ENCODE measurements at regions of chr15 and their contacts with region 1.

Region 1: GRCh38 chr15:33360886-33361285 is 50.1 kb downstream of the RYR3 start:
- DNase-seq: no peak
- ATAC-seq: no peak
- H3K4me3 Mint-ChIP-seq: no peak overlapping the region
- H3K27ac Mint-ChIP-seq: no peak overlapping the region
- H3K4me1 Mint-ChIP-seq: no peaks in the 10 kb centered on the region
- H3K27me3 Mint-ChIP-seq: peaks cover 8% of the 10 kb centered on the region

Region 2: DNA sequence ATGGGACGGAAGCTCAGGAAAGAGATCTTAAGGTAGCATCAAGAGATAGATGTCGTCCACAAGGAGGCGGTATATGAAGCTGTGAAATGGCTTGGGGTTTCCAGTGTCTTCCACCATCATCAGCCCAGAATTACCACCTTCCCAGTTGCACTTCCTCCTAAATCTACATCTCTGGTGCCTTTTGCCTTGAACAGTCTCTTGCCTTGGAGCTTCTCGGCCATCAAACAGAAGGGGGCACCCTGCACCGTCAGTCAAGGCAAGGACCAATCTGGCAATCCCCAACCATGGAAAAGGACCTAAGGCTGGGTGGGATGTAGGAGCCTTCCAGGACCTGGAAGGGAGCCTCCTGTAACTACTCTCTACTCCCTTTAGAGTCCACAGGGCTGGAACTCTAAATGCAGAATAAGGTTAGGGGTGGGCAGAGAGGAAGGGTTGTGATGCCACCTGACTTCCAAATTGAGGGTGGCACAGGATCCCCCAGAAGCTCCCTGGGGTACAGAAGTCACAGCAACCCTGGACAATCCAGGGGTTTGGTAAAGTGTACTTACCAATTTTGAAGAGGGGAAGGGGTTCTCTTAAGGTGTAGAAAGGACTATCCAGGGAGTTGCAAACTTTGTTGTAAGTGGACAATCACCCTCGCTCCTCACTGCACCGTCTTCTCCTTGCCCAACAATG is 51.1 kb before region 1 on chr15:
- CTCF ChIA-PET with region 1: no interaction called
- POLR2A ChIA-PET with region 1: no interaction called
- intact Hi-C with region 1: loop called in 1 of 2 experiments (anchors 10 kb)
- DNase-seq: peak; percentile 15
- ATAC-seq: no peak
- H3K4me3 Mint-ChIP-seq: no peak overlapping the region
- H3K27ac Mint-ChIP-seq: no peak overlapping the region
- H3K4me1 Mint-ChIP-seq: no peaks in the 10 kb centered on the region
- H3K27me3 Mint-ChIP-seq: peaks cover 40% of the 10 kb centered on the region

Region 3: GRCh38 chr15:33330931-33331330 is 30.0 kb before region 1 on chr15:
- CTCF ChIA-PET with region 1: no interaction called
- POLR2A ChIA-PET with region 1: no interaction called
- intact Hi-C with region 1: no loop called
- DNase-seq: no peak
- ATAC-seq: no peak
- H3K4me3 Mint-ChIP-seq: no peak overlapping the region
- H3K27ac Mint-ChIP-seq: no peak overlapping the region
- H3K4me1 Mint-ChIP-seq: no peaks in the 10 kb centered on the region
- H3K27me3 Mint-ChIP-seq: peaks cover 40% of the 10 kb centered on the region

Measured in activated CD4-positive, alpha-beta T cell treated with anti-CD3 and anti-CD28 coated beads for 36 hours (primary cell).